Naive thymus-derived CD4-positive, alpha-beta T cell (primary cell): ENCODE measurements at regions of chr5 and their contacts with region 1.

Region 1: GRCh38 chr5:178075840-178076548 is 37.3 kb upstream of the N4BP3 start:
- DNase-seq: peak; percentile 61 to 84 (median 76)
- ATAC-seq: peak; percentile 94
- H3K4me3 ChIP-seq: no peak overlapping the region
- H3K4me3 Mint-ChIP-seq: peak overlapping the region in 4 of 10 donors; percentile 47 to 66 (median 56)
- H3K27ac ChIP-seq: no peak overlapping the region
- H3K27ac Mint-ChIP-seq: peak overlapping the region in 2 of 9 donors; percentile 11 to 34
- H3K4me1 ChIP-seq: peaks cover 0 to 4% of the 10 kb centered on the region in 2 donors
- H3K4me1 Mint-ChIP-seq: peaks cover 0 to 6% (median 4%) of the 10 kb centered on the region in 7 donors
- H3K27me3 ChIP-seq: no peaks in the 10 kb centered on the region
- H3K27me3 Mint-ChIP-seq: peaks cover 0 to 14% (median 3%) of the 10 kb centered on the region in 5 donors

Region 2: DNA sequence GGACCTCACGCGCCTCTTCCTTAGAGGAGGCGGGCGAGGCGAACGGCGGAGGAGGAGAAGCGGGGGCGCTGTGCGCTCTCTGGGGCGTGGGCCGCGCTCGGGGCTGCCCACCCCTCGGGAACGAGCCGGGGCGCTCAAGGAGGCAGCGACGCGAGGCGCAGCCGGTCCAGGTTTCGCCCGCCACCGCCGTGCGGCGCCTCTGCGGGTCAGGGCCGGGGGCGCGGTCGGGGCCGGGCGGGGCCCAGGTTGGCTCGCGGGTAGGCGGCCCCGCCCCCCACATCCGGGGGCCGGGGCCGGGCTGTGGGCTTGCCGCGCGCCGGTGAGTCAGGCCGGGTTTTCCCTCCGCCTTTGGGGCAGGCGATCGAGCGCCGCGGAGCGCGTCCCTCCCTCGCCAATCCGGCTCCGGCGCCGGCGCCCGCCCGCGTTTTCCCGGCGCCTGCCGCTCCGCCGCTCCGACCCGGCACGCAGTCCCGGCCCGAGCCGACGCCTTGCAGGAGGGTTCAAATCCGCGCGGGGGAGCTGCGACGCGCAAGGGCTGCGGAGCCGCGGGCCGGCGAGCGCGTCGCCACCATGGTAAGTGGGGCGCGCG is 37.3 kb after region 1 on chr5 and contains the start of gene N4BP3:
- CTCF ChIA-PET with region 1: interaction called, 3 read pairs
- POLR2A ChIA-PET with region 1: no interaction called
- intact Hi-C with region 1: loop called in 1 of 2 experiments (anchors 5 kb)
- DNase-seq: peak; percentile 31 to 89 (median 56)
- ATAC-seq: peak; percentile 73
- H3K4me3 ChIP-seq: peak within 1 kb of the TSS; percentile 50
- H3K4me3 Mint-ChIP-seq: peak within 1 kb of the TSS; percentile 82 to 96 (median 87)
- H3K27ac ChIP-seq: no peak within 1 kb of the TSS
- H3K27ac Mint-ChIP-seq: peak within 1 kb of the TSS in 6 of 9 donors; percentile 10 to 81 (median 68)
- H3K4me1 ChIP-seq: peaks cover 38 to 43% of the 10 kb centered on the region in 2 donors
- H3K4me1 Mint-ChIP-seq: peaks cover 20 to 43% (median 34%) of the 10 kb centered on the region in 7 donors
- H3K27me3 ChIP-seq: no peaks in the 10 kb centered on the region
- H3K27me3 Mint-ChIP-seq: peaks cover 0 to 46% (median 8%) of the 10 kb centered on the region in 5 donors
- total RNA-seq, gene N4BP3: 0.79 to 3.5 (median 2.1) TPM

Region 3: DNA sequence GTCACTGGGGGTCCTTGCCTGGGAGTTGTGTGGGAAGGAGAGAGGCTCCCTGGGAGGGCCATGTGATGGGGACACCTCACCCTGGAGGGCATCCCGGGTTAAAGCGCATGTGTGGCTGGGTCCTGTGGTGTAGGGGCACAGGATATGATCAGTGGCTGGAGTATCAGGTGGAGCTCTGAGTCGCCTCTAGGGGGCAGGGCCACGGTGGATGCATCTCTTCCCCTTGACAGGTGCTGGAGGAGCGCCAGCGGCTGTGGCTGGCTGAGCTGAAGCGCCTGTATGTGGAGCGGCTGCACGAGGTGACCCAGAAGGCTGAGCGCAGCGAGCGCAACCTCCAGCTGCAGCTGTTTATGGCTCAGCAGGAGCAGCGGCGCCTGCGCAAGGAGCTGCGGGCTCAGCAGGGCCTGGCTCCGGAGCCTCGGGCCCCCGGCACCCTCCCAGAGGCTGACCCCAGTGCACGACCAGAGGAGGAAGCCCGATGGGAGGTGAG is 44.9 kb after region 1 on chr5:
- CTCF ChIA-PET with region 1: interaction called, 22 read pairs
- POLR2A ChIA-PET with region 1: no interaction called
- intact Hi-C with region 1: loop called in 1 of 2 experiments (anchors 1 kb)
- DNase-seq: peak; percentile 69 to 90 (median 87)
- ATAC-seq: peak; percentile 86
- H3K4me3 ChIP-seq: peak overlapping the region; percentile 50
- H3K4me3 Mint-ChIP-seq: peak overlapping the region; percentile 23 to 83 (median 69)
- H3K27ac ChIP-seq: peak overlapping the region; percentile 9
- H3K27ac Mint-ChIP-seq: peak overlapping the region in 3 of 9 donors; percentile 10 to 48 (median 29)
- H3K4me1 ChIP-seq: peaks cover 27 to 32% of the 10 kb centered on the region in 2 donors
- H3K4me1 Mint-ChIP-seq: peaks cover 15 to 30% (median 24%) of the 10 kb centered on the region in 7 donors
- H3K27me3 ChIP-seq: no peaks in the 10 kb centered on the region
- H3K27me3 Mint-ChIP-seq: peaks cover 0 to 8% (median 3%) of the 10 kb centered on the region in 5 donors

Region 4: DNA sequence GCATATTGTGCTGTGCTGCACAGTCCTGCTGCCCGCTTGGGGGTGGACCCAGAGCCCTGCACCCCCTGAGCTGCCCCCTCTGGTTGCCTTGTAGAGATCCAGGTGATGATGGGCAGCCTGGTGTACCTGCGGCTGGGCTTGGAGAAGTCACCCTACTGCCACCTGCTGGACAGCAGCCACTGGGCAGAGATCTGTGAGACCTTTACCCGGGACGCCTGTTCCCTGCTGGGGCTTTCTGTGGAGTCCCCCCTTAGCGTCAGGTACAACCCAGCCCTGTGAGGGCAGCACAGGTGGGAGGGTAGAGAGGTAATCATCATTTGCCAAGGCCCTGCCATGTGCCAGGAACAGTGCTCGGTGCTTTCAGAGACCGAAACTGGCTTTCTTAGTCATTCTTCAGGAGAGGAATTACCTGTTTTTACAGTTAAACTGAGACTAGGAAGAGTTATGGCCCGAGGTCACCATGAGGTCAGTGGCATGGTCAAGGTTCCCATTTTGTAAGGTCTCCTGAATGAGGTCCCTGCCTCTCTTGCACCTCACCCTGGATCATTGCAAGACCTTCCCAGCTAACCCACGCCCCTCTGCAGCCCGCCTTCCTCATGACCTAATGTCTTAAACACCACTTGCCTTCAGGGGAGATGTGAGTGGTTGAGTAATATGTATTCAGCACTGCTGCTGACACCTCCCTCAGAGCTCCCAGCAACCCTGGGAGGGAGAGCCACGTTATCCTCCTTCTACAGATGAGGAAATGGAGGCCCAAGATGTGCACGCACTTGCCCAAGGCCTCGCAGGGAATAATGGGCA is 70.2 kb after region 1 on chr5:
- CTCF ChIA-PET with region 1: interaction called, 117 read pairs
- POLR2A ChIA-PET with region 1: interaction called, 4 read pairs
- intact Hi-C with region 1: loop called (anchors 1 kb)
- DNase-seq: peak; percentile 51 to 76 (median 68)
- ATAC-seq: peak; percentile 90
- H3K4me3 ChIP-seq: no peak overlapping the region
- H3K4me3 Mint-ChIP-seq: no peak overlapping the region
- H3K27ac ChIP-seq: no peak overlapping the region
- H3K27ac Mint-ChIP-seq: peak overlapping the region in 4 of 9 donors; percentile 6 to 68 (median 51)
- H3K4me1 ChIP-seq: no peaks in the 10 kb centered on the region
- H3K4me1 Mint-ChIP-seq: peaks cover 4 to 28% (median 14%) of the 10 kb centered on the region in 7 donors
- H3K27me3 ChIP-seq: no peaks in the 10 kb centered on the region
- H3K27me3 Mint-ChIP-seq: no peaks in the 10 kb centered on the region

Region 5: GRCh38 chr5:178163772-178164735 is 88.1 kb after region 1 on chr5:
- CTCF ChIA-PET with region 1: interaction called, 15 read pairs
- POLR2A ChIA-PET with region 1: no interaction called
- intact Hi-C with region 1: loop called (anchors 1 kb)
- DNase-seq: peak; percentile 79 to 98 (median 92)
- ATAC-seq: peak; percentile 100
- H3K4me3 ChIP-seq: no peak overlapping the region
- H3K4me3 Mint-ChIP-seq: peak overlapping the region in 6 of 10 donors; percentile 27 to 69 (median 55)
- H3K27ac ChIP-seq: no peak overlapping the region
- H3K27ac Mint-ChIP-seq: no peak overlapping the region
- H3K4me1 ChIP-seq: peaks cover 0 to 3% of the 10 kb centered on the region in 2 donors
- H3K4me1 Mint-ChIP-seq: peaks cover 0 to 10% (median 8%) of the 10 kb centered on the region in 7 donors
- H3K27me3 ChIP-seq: no peaks in the 10 kb centered on the region
- H3K27me3 Mint-ChIP-seq: peaks cover 0 to 30% (median 9%) of the 10 kb centered on the region in 5 donors